ENCODE measurements at regions of chr17 and their contacts with region 1.

Region 1: GRCh38 chr17:34961093-34961911 is at the starts of genes CCT6B and ZNF830:
- DNase-seq: peak; percentile 79 to 92
- H3K4me3 ChIP-seq: peak within 1 kb of the TSS; percentile 83 to 99 (median 92)
- H3K27ac ChIP-seq: peak within 1 kb of the TSS; percentile 93
- H3K4me1 ChIP-seq: 0 out of 7 replicates have a peak, but pooled peaks cover 0 to 3% (median under 1%) of the 10 kb centered on the region in 4 experiments
- H3K27me3 ChIP-seq: peaks cover 0 to 2% (median 0%) of the 10 kb centered on the region in 4 experiments; a peak in 2 of 7 replicates
- CTCF ChIP-seq: no peak
- EP300 ChIP-seq: no peak
- POLR2A ChIP-seq: peak; percentile 90 to 95
- RAD21 ChIP-seq: no peak
- total RNA-seq, gene CCT6B: 0.48 and 1.3 TPM in 2 replicates
- total RNA-seq, gene ZNF830: 18.5 and 19.9 TPM in 2 replicates

Region 2: DNA sequence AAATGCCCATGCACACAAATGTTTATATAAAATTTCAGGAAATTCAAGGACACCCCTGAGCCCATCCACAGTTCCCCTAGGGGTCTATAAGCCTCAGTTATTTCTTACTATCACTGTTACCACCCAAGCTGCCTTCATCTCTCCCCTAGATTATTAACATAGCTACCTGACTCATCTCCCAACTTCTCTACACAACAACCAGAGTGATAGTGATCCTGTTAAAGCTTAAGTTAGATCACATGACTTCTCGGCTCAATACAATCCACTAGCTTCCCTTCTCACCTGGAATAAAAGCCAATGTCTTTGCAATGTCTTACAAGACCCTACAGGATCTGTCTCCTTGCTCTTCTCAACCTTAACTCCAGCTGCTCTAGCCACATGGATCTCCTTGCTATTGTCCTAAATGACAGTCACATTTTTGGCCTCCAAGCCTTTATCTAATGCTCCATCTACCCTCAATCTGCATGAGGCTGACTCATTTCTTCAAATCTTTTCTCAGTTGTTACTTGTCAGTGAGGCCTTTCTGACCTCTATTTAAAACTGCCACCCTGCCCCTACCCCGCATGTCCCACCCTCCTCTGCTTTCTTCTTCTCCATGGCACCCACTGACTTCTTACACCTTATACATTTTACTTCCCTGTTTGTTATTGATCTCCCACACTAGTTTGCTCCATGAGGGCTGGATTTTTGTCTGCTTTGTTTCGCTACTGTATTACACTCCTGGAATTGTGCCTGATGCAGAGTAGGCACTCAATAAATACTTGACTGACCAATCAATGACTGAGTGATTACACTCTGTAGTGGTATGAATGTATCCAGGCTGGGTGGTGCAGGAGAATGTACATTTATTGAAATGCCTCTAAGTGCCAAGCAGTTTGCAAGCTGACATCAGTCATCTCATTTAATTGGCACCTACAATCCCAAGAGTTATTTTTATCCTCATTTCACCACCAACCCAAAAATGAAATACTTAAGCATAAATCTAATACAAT is 13.8 kb after region 1 on chr17:
- CTCF ChIA-PET with region 1: interaction called, 8 read pairs
- POLR2A ChIA-PET with region 1: interaction called, 27 read pairs
- DNase-seq: peak in 1 of 2 experiments; percentile 6
- H3K4me3 ChIP-seq: no peak overlapping the region
- H3K27ac ChIP-seq: no peak overlapping the region
- H3K4me1 ChIP-seq: peaks cover 0 to 3% (median 0%) of the 10 kb centered on the region in 4 experiments; a peak in 1 of 7 replicates
- H3K27me3 ChIP-seq: no peaks in the 10 kb centered on the region
- CTCF ChIP-seq: no peak
- EP300 ChIP-seq: no peak
- POLR2A ChIP-seq: no peak
- RAD21 ChIP-seq: no peak

Region 3: GRCh38 chr17:34980681-34981537 is 19.6 kb after region 1 on chr17:
- CTCF ChIA-PET with region 1: interaction called, 8 read pairs
- POLR2A ChIA-PET with region 1: interaction called, 27 read pairs
- DNase-seq: peak in 1 of 2 experiments; percentile 72
- H3K4me3 ChIP-seq: peak overlapping the region; percentile 72 to 98 (median 76)
- H3K27ac ChIP-seq: peak overlapping the region; percentile 91
- H3K4me1 ChIP-seq: peaks cover 0 to 6% (median 4%) of the 10 kb centered on the region in 4 experiments; a peak in 4 of 7 replicates
- H3K27me3 ChIP-seq: no peaks in the 10 kb centered on the region
- CTCF ChIP-seq: peak; percentile 19 to 26 (median 24); a peak in 3 of 4 replicates
- EP300 ChIP-seq: no peak
- POLR2A ChIP-seq: peak; percentile 45 to 80
- RAD21 ChIP-seq: no peak; a peak in 1 of 4 replicates

Measured in H1 (cell line).